ENCODE measurements at regions of chr18 and their contacts with region 1.

Region 1: GRCh38 chr18:36296650-36297416 is 680 bp upstream of the FHOD3 start:
- DNase-seq: peak; percentile 41
- H3K4me3 Mint-ChIP-seq: no peak overlapping the region
- H3K27ac Mint-ChIP-seq: no peak overlapping the region
- H3K4me1 Mint-ChIP-seq: no peaks in the 10 kb centered on the region
- H3K27me3 Mint-ChIP-seq: peaks cover 18% of the 10 kb centered on the region

Region 2: DNA sequence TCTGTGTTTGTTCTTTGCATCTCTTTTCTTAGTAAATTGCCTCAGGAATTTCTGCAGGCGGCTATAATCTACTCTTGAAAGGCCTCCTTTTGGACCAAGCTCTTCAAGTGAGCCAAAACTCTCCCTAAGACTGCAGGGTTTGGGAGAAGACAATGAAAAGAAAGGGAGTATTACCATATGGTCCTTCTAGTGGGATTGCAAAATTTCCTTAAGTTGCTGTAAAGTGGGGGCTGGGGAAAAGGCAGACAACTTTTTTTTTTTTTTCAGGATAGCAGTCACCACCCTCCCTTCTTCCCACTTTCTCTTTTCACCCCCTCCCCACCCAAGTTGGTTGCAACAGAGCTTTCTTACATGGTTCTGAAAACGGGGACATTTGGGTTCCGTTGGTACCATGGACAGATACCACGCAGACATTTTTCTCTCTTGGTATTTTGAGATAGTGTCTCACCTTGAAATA is 184.4 kb after region 1 on chr18:
- CTCF ChIA-PET with region 1: no interaction called
- intact Hi-C with region 1: no loop called
- DNase-seq: no peak
- H3K4me3 Mint-ChIP-seq: no peak overlapping the region
- H3K27ac Mint-ChIP-seq: no peak overlapping the region
- H3K4me1 Mint-ChIP-seq: no peaks in the 10 kb centered on the region
- H3K27me3 Mint-ChIP-seq: peaks cover 12% of the 10 kb centered on the region

Region 3: DNA sequence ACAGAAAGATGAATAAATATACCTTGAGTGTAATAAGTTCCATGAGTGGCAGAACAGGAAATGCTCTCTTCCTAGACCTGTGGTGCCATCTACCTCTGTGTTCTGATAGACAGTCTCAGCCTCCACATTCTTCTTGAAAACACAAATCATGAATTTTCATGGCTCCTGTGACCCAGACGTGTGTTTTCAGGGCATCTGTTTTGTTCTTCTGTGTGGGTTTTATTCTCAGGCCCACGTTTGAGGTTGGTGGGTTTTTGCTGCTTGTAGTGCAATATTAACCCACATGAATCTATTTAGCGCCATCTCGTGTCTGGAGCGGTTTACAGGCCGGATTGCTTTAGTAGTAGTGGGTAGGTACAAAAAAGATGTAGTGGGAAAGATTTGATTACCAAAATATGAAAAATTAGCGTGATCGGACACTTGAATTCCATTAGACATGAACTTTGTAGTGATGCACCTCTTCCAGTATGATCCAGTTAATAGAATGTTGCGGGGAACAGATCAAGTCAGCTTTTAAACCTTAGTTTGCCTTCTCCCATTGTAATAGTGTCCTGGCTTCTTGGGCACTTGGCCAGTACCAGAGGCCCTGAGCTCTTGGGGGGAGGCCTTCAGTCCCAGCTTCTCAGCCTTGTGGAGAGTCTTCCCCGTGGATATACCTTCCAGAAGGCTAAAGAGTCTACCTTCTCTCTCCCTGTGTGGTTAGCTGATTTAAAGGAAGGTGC is 275.5 kb after region 1 on chr18:
- CTCF ChIA-PET with region 1: no interaction called
- intact Hi-C with region 1: loop called (anchors 1 kb)
- DNase-seq: peak; percentile 50
- H3K4me3 Mint-ChIP-seq: no peak overlapping the region
- H3K27ac Mint-ChIP-seq: no peak overlapping the region
- H3K4me1 Mint-ChIP-seq: no peaks in the 10 kb centered on the region
- H3K27me3 Mint-ChIP-seq: peaks cover 8% of the 10 kb centered on the region

Region 4: GRCh38 chr18:36809590-36810381 is 513.0 kb after region 1 on chr18:
- CTCF ChIA-PET with region 1: no interaction called
- intact Hi-C with region 1: loop called (anchors 5 kb)
- DNase-seq: peak; percentile 28
- H3K4me3 Mint-ChIP-seq: no peak overlapping the region
- H3K27ac Mint-ChIP-seq: no peak overlapping the region
- H3K4me1 Mint-ChIP-seq: peaks cover 10% of the 10 kb centered on the region
- H3K27me3 Mint-ChIP-seq: no peaks in the 10 kb centered on the region

Region 5: DNA sequence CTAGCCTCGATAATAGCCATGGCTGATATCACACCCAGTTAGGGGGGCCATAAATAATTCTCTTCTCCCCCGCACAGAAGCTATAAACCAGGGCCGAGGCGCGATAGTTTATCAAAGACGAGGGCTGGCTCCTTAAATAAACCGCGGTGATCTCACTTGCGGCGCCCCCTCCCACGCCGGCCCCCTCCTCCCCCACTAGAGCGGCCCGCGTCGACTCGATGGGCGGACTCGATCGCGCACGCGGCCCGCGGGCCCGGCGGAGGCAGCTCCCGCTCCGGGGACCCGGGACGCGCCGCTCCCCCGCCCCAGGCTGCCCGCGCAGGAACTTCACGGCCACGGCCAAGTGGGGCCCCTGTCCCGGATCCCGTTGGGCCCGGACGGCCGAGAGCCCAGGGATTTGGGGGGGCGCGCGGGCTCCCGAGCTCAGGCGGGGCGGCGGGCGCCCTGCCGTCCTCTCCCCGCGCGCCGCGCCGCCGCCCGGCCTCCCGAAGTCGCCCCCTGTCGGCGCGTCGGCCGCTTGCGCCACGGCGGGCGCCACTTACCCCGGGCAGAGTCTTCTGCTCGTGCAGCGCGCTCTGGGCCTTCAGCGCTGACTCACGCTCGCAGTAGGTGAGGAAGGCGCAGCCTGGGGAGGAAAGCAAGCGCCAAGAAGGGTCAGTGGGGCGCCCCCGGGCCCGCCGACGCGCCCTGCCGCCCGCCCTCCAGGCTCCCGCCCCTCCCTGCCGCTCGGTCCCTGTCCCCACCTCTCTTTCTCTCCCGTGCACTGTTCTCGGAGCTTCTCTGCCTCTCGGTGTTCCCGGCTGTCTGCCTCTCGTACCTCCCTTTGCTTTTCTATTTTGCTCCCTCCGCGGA is 1188.4 kb after region 1 on chr18:
- CTCF ChIA-PET with region 1: no interaction called
- intact Hi-C with region 1: no loop called
- DNase-seq: peak; percentile 23
- H3K4me3 Mint-ChIP-seq: no peak overlapping the region
- H3K27ac Mint-ChIP-seq: no peak overlapping the region
- H3K4me1 Mint-ChIP-seq: peaks cover 10% of the 10 kb centered on the region
- H3K27me3 Mint-ChIP-seq: peaks cover 69% of the 10 kb centered on the region

Measured in activated naive CD4-positive, alpha-beta T cell treated with anti-CD3 and anti-CD28 coated beads for 36 hours (primary cell).